Caco-2 (cell line): ENCODE measurements at regions of chr14 and their contacts with region 1.

Region 1: DNA sequence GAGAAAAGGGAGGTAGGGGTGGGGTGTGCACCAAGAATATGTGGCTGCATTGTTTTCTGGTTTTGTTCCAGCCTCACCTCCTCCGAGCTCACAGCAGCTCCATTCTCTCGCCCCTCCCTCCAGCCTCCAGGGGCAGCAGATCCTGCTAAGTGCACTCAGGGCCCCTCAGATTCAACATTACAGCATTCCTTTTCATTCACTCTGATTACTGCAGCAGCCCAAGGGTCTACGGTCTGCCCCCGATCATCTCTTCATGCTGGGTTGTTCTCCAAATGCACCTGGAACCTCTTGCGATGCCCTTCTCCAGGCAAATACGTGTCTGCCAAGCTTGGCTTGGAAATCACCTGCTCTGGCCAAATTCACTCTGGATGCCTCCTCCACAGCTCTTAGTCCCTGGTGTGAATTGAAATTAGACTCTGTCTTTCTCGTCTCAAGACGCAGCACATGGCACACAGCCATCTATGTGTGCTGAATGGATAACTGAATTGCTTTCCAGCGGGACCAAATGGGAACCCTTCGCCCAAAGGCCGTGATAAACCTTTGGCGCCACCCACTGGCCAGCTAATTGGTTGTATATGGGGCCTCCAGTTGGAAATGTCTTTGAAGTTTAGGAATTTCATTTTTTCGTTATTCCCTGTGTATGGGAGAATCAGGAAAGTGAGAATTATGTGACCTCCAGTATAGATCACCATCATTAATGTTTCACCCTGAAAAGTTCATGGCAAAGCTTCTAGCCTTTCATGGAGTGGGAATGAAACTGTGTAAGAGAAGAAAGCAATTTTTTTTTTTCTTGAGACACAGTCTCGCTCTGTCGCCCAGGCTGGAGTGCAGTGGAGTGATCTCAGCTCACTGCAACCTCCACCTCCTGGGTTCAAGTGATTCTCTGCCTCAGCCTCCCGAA is 9.6 kb upstream of the HSP90AA1 start:
- DNase-seq: peak; percentile 80 to 87
- H3K4me3 ChIP-seq: no peak overlapping the region
- H3K4me3 Mint-ChIP-seq: peak overlapping the region; percentile 62
- H3K27ac Mint-ChIP-seq: peak overlapping the region; percentile 49
- H3K4me1 ChIP-seq: peaks cover 36% of the 10 kb centered on the region
- H3K4me1 Mint-ChIP-seq: peaks cover 16% of the 10 kb centered on the region
- H3K27me3 ChIP-seq: no peaks in the 10 kb centered on the region
- H3K27me3 Mint-ChIP-seq: no peaks in the 10 kb centered on the region
- CTCF ChIP-seq: peak; percentile 58 to 86

Region 2: GRCh38 chr14:101707068-101707842 is 389.2 kb before region 1 on chr14:
- CTCF ChIA-PET with region 1: interaction called, 3 read pairs
- POLR2A ChIA-PET with region 1: no interaction called
- intact Hi-C with region 1: loop called (anchors 1 kb)
- DNase-seq: peak; percentile 50 to 72
- H3K4me3 ChIP-seq: no peak overlapping the region
- H3K4me3 Mint-ChIP-seq: no peak overlapping the region
- H3K27ac Mint-ChIP-seq: no peak overlapping the region
- H3K4me1 ChIP-seq: 0 out of 2 replicates have a peak, but pooled peaks cover 4% of the 10 kb centered on the region
- H3K4me1 Mint-ChIP-seq: no peaks in the 10 kb centered on the region
- H3K27me3 ChIP-seq: no peaks in the 10 kb centered on the region
- H3K27me3 Mint-ChIP-seq: peaks cover 4% of the 10 kb centered on the region
- CTCF ChIP-seq: peak; percentile 60 to 82

Region 3: GRCh38 chr14:101797856-101798255 is 298.6 kb before region 1 on chr14:
- CTCF ChIA-PET with region 1: no interaction called
- POLR2A ChIA-PET with region 1: no interaction called
- intact Hi-C with region 1: no loop called
- DNase-seq: no peak
- H3K4me3 ChIP-seq: no peak overlapping the region
- H3K4me3 Mint-ChIP-seq: no peak overlapping the region
- H3K27ac Mint-ChIP-seq: no peak overlapping the region
- H3K4me1 ChIP-seq: no peaks in the 10 kb centered on the region
- H3K4me1 Mint-ChIP-seq: no peaks in the 10 kb centered on the region
- H3K27me3 ChIP-seq: no peaks in the 10 kb centered on the region
- H3K27me3 Mint-ChIP-seq: no peaks in the 10 kb centered on the region
- CTCF ChIP-seq: no peak

Region 4: GRCh38 chr14:101964297-101965144 is 131.9 kb before region 1 on chr14 and contains the start of gene DYNC1H1:
- CTCF ChIA-PET with region 1: interaction called, 3 read pairs
- POLR2A ChIA-PET with region 1: no interaction called
- intact Hi-C with region 1: loop called (anchors 2 kb)
- DNase-seq: peak; percentile 84 to 93
- H3K4me3 ChIP-seq: peak within 1 kb of the TSS; percentile 84
- H3K4me3 Mint-ChIP-seq: peak within 1 kb of the TSS; percentile 79
- H3K27ac Mint-ChIP-seq: peak within 1 kb of the TSS; percentile 42
- H3K4me1 ChIP-seq: peaks cover 21% of the 10 kb centered on the region
- H3K4me1 Mint-ChIP-seq: peaks cover 12% of the 10 kb centered on the region
- H3K27me3 ChIP-seq: no peaks in the 10 kb centered on the region
- H3K27me3 Mint-ChIP-seq: no peaks in the 10 kb centered on the region
- CTCF ChIP-seq: no peak
- total RNA-seq, gene DYNC1H1: 349 and 351 TPM in 2 replicates

Region 5: GRCh38 chr14:102046343-102047278 is 49.9 kb before region 1 on chr14:
- CTCF ChIA-PET with region 1: interaction called, 24 read pairs
- POLR2A ChIA-PET with region 1: no interaction called
- intact Hi-C with region 1: loop called (anchors 1 kb)
- DNase-seq: peak; percentile 83 to 88
- H3K4me3 ChIP-seq: no peak overlapping the region
- H3K4me3 Mint-ChIP-seq: no peak overlapping the region
- H3K27ac Mint-ChIP-seq: no peak overlapping the region
- H3K4me1 ChIP-seq: no peaks in the 10 kb centered on the region
- H3K4me1 Mint-ChIP-seq: no peaks in the 10 kb centered on the region
- H3K27me3 ChIP-seq: no peaks in the 10 kb centered on the region
- H3K27me3 Mint-ChIP-seq: no peaks in the 10 kb centered on the region
- CTCF ChIP-seq: peak; percentile 52 to 81

Region 6: DNA sequence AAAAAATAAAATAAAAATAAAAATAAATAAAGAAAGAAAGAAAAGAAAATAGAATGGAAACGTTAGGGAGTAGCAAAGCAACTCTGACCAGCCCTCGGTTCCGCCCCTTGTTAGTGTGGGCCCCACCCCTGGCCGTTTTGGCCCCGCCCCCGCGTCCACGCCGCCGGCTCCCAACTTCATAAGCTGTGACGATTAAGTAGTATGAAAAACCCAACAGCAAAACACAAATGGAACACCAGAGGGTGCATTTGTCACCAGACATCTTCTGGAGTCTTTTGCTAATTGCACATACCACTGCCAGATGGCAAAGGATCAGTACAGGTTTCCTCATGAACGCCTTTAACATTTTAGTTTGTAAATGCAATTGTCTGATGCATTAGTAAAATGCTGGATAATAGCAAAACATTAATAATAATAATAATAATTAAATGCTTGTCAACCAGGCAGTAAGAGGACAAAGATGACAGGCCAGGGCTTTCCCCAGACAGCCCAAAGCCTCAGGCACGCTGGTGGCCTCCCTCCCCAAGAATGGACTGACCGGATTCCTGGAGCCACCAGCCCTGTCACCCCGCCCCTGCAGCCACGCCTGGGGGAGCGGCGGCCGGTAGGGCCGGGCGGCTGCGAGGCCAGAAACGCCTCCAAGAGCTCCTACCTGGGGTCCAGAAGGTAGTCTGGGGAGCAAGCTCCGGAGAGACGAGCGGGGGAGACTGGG is 33.2 kb before region 1 on chr14:
- CTCF ChIA-PET with region 1: interaction called, 26 read pairs
- POLR2A ChIA-PET with region 1: interaction called, 5 read pairs
- intact Hi-C with region 1: loop called (anchors 1 kb)
- DNase-seq: peak; percentile 87 to 89
- H3K4me3 ChIP-seq: 0 out of 2 replicates have a peak overlapping the region, but pooled peaks have one; percentile 13
- H3K4me3 Mint-ChIP-seq: peak overlapping the region; percentile 63
- H3K27ac Mint-ChIP-seq: peak overlapping the region; percentile 85
- H3K4me1 ChIP-seq: peaks cover 10% of the 10 kb centered on the region
- H3K4me1 Mint-ChIP-seq: peaks cover 7% of the 10 kb centered on the region
- H3K27me3 ChIP-seq: no peaks in the 10 kb centered on the region
- H3K27me3 Mint-ChIP-seq: no peaks in the 10 kb centered on the region
- CTCF ChIP-seq: peak; percentile 34 to 45

Region 7: GRCh38 chr14:102139248-102140026 is 43.0 kb after region 1 on chr14 and contains the start of gene WDR20:
- CTCF ChIA-PET with region 1: interaction called, 3 read pairs
- POLR2A ChIA-PET with region 1: no interaction called
- intact Hi-C with region 1: loop called (anchors 1 kb)
- DNase-seq: peak; percentile 99
- H3K4me3 ChIP-seq: peak within 1 kb of the TSS; percentile 96
- H3K4me3 Mint-ChIP-seq: peak within 1 kb of the TSS; percentile 98
- H3K27ac Mint-ChIP-seq: peak within 1 kb of the TSS; percentile 91
- H3K4me1 ChIP-seq: peaks cover 6% of the 10 kb centered on the region; the same call in 1 of the 2 replicates
- H3K4me1 Mint-ChIP-seq: peaks cover 11% of the 10 kb centered on the region
- H3K27me3 ChIP-seq: no peaks in the 10 kb centered on the region
- H3K27me3 Mint-ChIP-seq: no peaks in the 10 kb centered on the region
- CTCF ChIP-seq: peak in 1 of 2 experiments; percentile 19
- total RNA-seq, gene WDR20: 32.5 and 34.0 TPM in 2 replicates

Region 8: DNA sequence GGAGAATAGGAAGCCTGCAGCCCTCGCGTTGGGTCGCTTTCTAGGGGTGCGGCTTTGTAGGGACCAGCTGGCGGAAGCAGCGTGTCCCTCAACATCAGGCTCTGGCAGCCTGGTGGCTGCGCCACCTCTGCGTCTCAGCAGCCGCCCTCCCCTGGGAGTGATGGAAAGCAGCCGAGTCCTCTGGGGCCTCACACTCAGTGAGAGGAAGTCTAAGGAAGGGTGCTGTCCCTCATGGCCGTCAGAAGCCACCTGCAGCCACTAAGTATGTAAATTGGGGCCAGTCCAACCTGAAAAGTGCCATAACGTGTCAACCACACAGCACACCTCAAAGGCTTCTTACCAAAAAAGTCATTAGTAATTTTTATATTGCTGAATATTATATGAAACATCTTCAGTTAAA is 123.6 kb after region 1 on chr14:
- CTCF ChIA-PET with region 1: no interaction called
- POLR2A ChIA-PET with region 1: no interaction called
- intact Hi-C with region 1: no loop called
- DNase-seq: no peak
- H3K4me3 ChIP-seq: no peak overlapping the region
- H3K4me3 Mint-ChIP-seq: no peak overlapping the region
- H3K27ac Mint-ChIP-seq: no peak overlapping the region
- H3K4me1 ChIP-seq: no peaks in the 10 kb centered on the region
- H3K4me1 Mint-ChIP-seq: no peaks in the 10 kb centered on the region
- H3K27me3 ChIP-seq: no peaks in the 10 kb centered on the region
- H3K27me3 Mint-ChIP-seq: no peaks in the 10 kb centered on the region
- CTCF ChIP-seq: no peak

Region 9: GRCh38 chr14:103091041-103091882 is 994.8 kb after region 1 on chr14:
- CTCF ChIA-PET with region 1: no interaction called
- POLR2A ChIA-PET with region 1: no interaction called
- intact Hi-C with region 1: no loop called
- DNase-seq: peak in 1 of 2 experiments; percentile 66
- H3K4me3 ChIP-seq: peak overlapping the region; percentile 28
- H3K4me3 Mint-ChIP-seq: peak overlapping the region; percentile 25
- H3K27ac Mint-ChIP-seq: no peak overlapping the region
- H3K4me1 ChIP-seq: peaks cover 19% of the 10 kb centered on the region
- H3K4me1 Mint-ChIP-seq: peaks cover 12% of the 10 kb centered on the region
- H3K27me3 ChIP-seq: no peaks in the 10 kb centered on the region
- H3K27me3 Mint-ChIP-seq: no peaks in the 10 kb centered on the region
- CTCF ChIP-seq: peak in 1 of 2 experiments; percentile 46